Activated CD8-positive, alpha-beta memory T cell treated with anti-CD3 and anti-CD28 coated beads, Interleukin-2, amount 10 ng/mL, durations not matched to agents 7 days and 5 days (primary cell): ENCODE measurements at regions of chr1 and their contacts with region 1.

Region 1: GRCh38 chr1:117758444-117759316 is 152.8 kb downstream of the TENT5C start:
- DNase-seq: peak; percentile 81
- ATAC-seq: peak; percentile 92
- H3K4me3 Mint-ChIP-seq: peak overlapping the region; percentile 65
- H3K27ac Mint-ChIP-seq: no peak overlapping the region
- H3K4me1 Mint-ChIP-seq: peaks cover 21% of the 10 kb centered on the region
- H3K27me3 Mint-ChIP-seq: peaks cover 21% of the 10 kb centered on the region

Region 2: DNA sequence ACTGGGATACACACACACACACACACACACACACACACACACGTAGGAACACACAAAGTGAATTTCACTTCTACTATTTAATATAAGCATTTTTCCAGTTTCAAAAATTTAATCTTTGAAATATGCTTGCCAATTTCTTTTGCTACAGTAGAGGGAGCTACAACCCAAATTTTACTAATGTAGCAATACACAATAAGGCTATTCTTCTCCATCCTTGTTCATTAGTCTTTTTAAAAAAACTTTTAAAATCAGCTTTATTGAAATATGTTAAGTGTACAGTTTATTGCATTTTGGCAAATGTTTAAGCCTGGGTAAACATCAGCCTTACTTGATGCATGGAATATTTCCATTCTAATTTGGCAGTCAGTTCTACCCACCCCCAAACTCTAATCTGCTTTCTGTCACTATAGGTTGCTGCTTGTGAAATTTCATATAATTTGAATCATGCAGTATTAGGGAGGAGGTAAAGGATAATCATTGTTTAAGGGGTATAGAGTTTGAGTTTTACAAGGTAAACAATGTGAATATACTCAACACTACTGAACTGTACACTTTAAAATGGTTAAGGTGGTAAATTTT is 245.8 kb before region 1 on chr1:
- CTCF ChIA-PET with region 1: interaction called, 78 read pairs
- DNase-seq: no peak
- ATAC-seq: peak; percentile 55
- H3K4me3 Mint-ChIP-seq: no peak overlapping the region
- H3K27ac Mint-ChIP-seq: no peak overlapping the region
- H3K4me1 Mint-ChIP-seq: peaks cover 4% of the 10 kb centered on the region
- H3K27me3 Mint-ChIP-seq: no peaks in the 10 kb centered on the region

Region 3: GRCh38 chr1:117605774-117606648 is 152.7 kb before region 1 on chr1 and contains the start of gene TENT5C:
- CTCF ChIA-PET with region 1: interaction called, 18 read pairs
- DNase-seq: peak; percentile 99
- ATAC-seq: peak; percentile 85
- H3K4me3 Mint-ChIP-seq: peak within 1 kb of the TSS; percentile 100
- H3K27ac Mint-ChIP-seq: peak within 1 kb of the TSS; percentile 98
- H3K4me1 Mint-ChIP-seq: peaks cover 45% of the 10 kb centered on the region
- H3K27me3 Mint-ChIP-seq: peaks cover 18% of the 10 kb centered on the region
- total RNA-seq, gene TENT5C: 41.6 to 50.3 TPM

Region 4: GRCh38 chr1:117674521-117675397 is 83.9 kb before region 1 on chr1:
- CTCF ChIA-PET with region 1: interaction called, 28 read pairs
- DNase-seq: peak; percentile 75
- ATAC-seq: peak; percentile 86
- H3K4me3 Mint-ChIP-seq: no peak overlapping the region
- H3K27ac Mint-ChIP-seq: peak overlapping the region; percentile 70
- H3K4me1 Mint-ChIP-seq: peaks cover 30% of the 10 kb centered on the region
- H3K27me3 Mint-ChIP-seq: no peaks in the 10 kb centered on the region

Region 5: DNA sequence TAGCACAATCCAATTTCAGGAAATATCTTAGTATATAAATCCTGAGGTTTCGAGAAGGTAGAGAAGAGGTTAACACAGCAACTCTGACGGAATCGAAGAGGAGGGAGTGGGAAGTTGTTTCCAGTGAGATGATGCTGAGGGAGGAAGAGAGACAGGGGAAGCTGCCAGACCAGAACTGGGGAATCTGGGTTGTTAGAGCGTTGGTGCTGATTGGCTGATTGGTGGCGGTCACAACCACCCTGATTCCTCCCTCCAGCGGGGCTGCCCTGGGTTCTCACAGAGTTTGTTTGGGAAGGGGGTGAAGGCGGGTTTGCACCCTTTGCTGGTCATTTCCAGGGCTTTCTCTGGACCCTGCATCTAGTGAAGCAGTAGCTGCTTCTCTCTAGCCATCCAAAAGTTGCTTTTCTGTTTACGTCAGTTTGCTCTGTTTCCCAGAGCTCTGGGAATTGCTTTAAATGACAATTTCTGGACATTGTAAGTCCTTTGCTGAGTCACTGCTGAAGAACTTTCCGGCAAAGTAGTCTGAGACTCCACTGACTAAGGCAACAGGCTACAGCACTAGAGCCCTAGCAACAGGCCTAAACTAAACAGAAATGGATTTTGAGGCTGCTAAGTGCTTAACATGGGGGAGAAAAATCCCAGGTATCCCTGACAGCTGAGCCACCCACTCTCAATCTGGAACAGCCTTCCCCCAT is 62.7 kb before region 1 on chr1:
- CTCF ChIA-PET with region 1: interaction called, 17 read pairs
- DNase-seq: no peak
- ATAC-seq: no peak
- H3K4me3 Mint-ChIP-seq: no peak overlapping the region
- H3K27ac Mint-ChIP-seq: no peak overlapping the region
- H3K4me1 Mint-ChIP-seq: peaks cover 33% of the 10 kb centered on the region
- H3K27me3 Mint-ChIP-seq: peaks cover 9% of the 10 kb centered on the region

Region 6: GRCh38 chr1:117735045-117735992 is 23.4 kb before region 1 on chr1:
- CTCF ChIA-PET with region 1: interaction called, 59 read pairs
- DNase-seq: peak; percentile 70
- ATAC-seq: peak; percentile 97
- H3K4me3 Mint-ChIP-seq: peak overlapping the region; percentile 73
- H3K27ac Mint-ChIP-seq: peak overlapping the region; percentile 92
- H3K4me1 Mint-ChIP-seq: peaks cover 11% of the 10 kb centered on the region
- H3K27me3 Mint-ChIP-seq: no peaks in the 10 kb centered on the region

Region 7: GRCh38 chr1:117895482-117896114 is 136.9 kb after region 1 on chr1:
- CTCF ChIA-PET with region 1: interaction called, 20 read pairs
- DNase-seq: peak; percentile 75
- ATAC-seq: peak; percentile 80
- H3K4me3 Mint-ChIP-seq: no peak overlapping the region
- H3K27ac Mint-ChIP-seq: no peak overlapping the region
- H3K4me1 Mint-ChIP-seq: peaks cover 8% of the 10 kb centered on the region
- H3K27me3 Mint-ChIP-seq: no peaks in the 10 kb centered on the region

Region 8: DNA sequence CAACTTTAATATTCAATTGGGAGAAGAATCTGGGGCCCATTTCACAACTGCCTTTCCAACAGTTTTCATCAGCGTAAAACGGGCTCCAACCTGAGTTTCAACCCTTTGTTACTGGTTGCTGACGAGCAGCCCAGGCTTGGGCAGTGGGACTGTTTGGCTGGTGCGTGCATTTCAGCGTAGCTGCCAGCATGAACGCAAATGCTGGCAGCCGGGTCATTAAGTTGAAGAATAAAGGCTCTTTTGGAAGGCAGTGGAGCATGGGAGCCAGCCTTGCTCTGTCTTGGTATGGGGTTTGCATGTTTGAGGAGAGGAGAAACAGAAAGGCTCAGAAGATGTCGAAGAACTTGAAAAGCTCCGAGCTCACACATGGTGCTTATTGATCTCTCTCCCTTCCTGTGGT is 211.6 kb after region 1 on chr1:
- CTCF ChIA-PET with region 1: no interaction called
- DNase-seq: no peak
- ATAC-seq: no peak
- H3K4me3 Mint-ChIP-seq: no peak overlapping the region
- H3K27ac Mint-ChIP-seq: no peak overlapping the region
- H3K4me1 Mint-ChIP-seq: no peaks in the 10 kb centered on the region
- H3K27me3 Mint-ChIP-seq: peaks cover 9% of the 10 kb centered on the region

Region 9: DNA sequence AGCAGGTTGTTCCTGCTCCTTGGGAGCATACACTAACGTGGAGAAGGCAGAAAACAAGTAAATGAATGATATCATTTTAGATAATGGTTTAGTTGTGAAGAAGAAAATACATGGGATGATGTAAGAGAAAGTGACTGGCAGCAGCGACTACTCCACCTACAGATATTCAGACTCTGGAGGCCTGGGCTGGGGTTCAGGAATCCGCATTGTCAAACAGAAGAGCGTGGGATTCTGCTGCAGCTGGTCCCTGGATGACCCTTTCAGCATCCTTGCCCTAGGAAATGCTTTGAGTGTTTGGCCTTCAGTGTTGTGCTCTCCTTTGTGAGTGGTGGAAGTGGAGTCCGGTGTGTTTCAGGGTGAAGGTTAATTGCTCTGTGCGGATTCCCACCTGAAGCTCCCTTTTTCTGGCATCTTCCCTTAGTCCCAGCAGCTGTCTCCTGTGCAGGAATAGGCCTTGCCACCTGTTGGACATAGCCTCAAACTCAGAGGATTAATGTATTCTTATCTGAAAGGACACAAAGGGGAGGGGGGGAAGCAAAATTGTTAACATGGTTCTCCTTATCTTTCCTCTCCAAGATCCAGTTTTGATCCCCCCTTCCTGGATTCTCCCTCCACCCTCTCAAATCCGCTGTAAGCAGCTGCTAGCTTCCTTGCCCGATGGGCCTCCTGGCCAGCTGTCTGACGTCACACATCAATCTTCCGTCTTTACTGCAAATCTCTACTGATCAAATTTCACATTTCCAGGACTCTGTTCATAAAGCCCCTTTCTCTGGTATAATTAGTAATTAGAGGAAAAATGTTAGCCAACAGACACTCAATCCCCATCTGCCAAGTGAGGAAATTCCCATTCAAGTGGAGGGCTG is 494.6 kb after region 1 on chr1:
- CTCF ChIA-PET with region 1: no interaction called
- DNase-seq: no peak
- ATAC-seq: no peak
- H3K4me3 Mint-ChIP-seq: no peak overlapping the region
- H3K27ac Mint-ChIP-seq: no peak overlapping the region
- H3K4me1 Mint-ChIP-seq: no peaks in the 10 kb centered on the region
- H3K27me3 Mint-ChIP-seq: no peaks in the 10 kb centered on the region